CD14-positive monocyte (primary cell): ENCODE measurements at regions of chr1 and their contacts with region 1.

Region 1: GRCh38 chr1:50368179-50369012 is 54.8 kb downstream of the DMRTA2 start:
- DNase-seq: no peak
- H3K4me3 ChIP-seq: no peak overlapping the region
- H3K4me3 Mint-ChIP-seq: peak overlapping the region in 1 of 2 donors; percentile 28
- H3K27ac ChIP-seq: no peak overlapping the region
- H3K27ac Mint-ChIP-seq: no peak overlapping the region
- H3K4me1 ChIP-seq: no peaks in the 10 kb centered on the region
- H3K4me1 Mint-ChIP-seq: peaks cover 3% of the 10 kb centered on the region
- H3K27me3 ChIP-seq: peaks cover 5 to 27% of the 10 kb centered on the region in 2 donors
- H3K27me3 Mint-ChIP-seq: peaks cover 37 to 57% (median 39%) of the 10 kb centered on the region in 3 donors
- CTCF ChIP-seq: peak; percentile 83

Region 2: GRCh38 chr1:50605186-50605875 is 236.9 kb after region 1 on chr1:
- intact Hi-C with region 1: loop called in 1 of 2 experiments (anchors 5 kb)
- DNase-seq: no peak
- H3K4me3 ChIP-seq: no peak overlapping the region
- H3K4me3 Mint-ChIP-seq: no peak overlapping the region
- H3K27ac ChIP-seq: no peak overlapping the region
- H3K27ac Mint-ChIP-seq: no peak overlapping the region
- H3K4me1 ChIP-seq: no peaks in the 10 kb centered on the region
- H3K4me1 Mint-ChIP-seq: no peaks in the 10 kb centered on the region
- H3K27me3 ChIP-seq: no peaks in the 10 kb centered on the region
- H3K27me3 Mint-ChIP-seq: no peaks in the 10 kb centered on the region
- CTCF ChIP-seq: peak; percentile 53

Region 3: GRCh38 chr1:50704126-50704525 is 335.7 kb after region 1 on chr1:
- intact Hi-C with region 1: loop called in 1 of 2 experiments (anchors 5 kb)
- DNase-seq: no peak
- H3K4me3 ChIP-seq: no peak overlapping the region
- H3K4me3 Mint-ChIP-seq: no peak overlapping the region
- H3K27ac ChIP-seq: no peak overlapping the region
- H3K27ac Mint-ChIP-seq: no peak overlapping the region
- H3K4me1 ChIP-seq: no peaks in the 10 kb centered on the region
- H3K4me1 Mint-ChIP-seq: no peaks in the 10 kb centered on the region
- H3K27me3 ChIP-seq: no peaks in the 10 kb centered on the region
- H3K27me3 Mint-ChIP-seq: no peaks in the 10 kb centered on the region
- CTCF ChIP-seq: peak; percentile 86